Panc1 (cell line): ENCODE measurements at regions of chr3 and their contacts with region 1.

Region 1: GRCh38 chr3:30606301-30607031 is at the start of gene TGFBR2:
- DNase-seq: peak; percentile 86
- ATAC-seq: peak; percentile 96
- H3K4me3 ChIP-seq: peak within 1 kb of the TSS; percentile 78 to 96
- H3K27ac ChIP-seq: peak within 1 kb of the TSS; percentile 88
- H3K4me1 ChIP-seq: peaks cover 32% of the 10 kb centered on the region
- H3K27me3 ChIP-seq: no peaks in the 10 kb centered on the region
- CTCF ChIP-seq: peak; percentile 39; the same call in 1 of the 2 replicates
- total RNA-seq, gene TGFBR2: 45.9 TPM

Region 2: DNA sequence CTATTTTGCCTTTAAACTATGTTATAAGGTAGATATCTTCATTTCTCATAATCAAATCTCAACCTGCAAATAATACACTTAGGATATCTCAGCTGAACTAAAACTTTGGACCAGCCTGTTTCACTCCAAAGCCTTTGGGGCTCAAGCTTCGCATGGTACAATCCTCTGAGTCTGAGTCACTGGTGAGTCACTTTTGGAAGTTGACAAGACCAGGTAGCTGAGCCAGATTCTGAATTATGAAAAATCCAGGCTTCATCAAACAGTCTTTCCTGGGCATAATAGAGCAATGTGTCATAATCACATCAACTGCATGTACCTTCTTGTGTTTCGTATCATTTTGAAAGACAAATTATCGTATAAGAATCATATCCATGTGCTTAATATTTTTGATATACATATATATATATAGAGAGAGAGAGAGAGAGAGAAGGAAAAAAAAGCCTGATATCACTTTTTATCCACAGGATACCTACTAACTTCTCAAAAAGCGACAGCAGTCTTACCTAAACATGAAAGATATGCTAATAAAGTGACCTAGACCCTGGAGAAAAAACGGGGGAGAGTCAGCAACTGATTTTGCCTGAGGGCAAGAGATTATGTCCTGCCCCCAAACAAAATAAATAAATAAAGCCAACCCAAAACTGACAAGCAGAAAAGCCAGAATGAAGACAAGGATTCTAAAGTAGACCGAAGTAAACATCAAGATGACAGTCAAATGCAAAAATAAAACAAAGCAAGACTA is 264.0 kb before region 1 on chr3:
- CTCF ChIA-PET with region 1: no interaction called
- POLR2A ChIA-PET with region 1: no interaction called
- in situ Hi-C with region 1: no loop called
- intact Hi-C with region 1: loop called (anchors 5 kb)
- DNase-seq: peak; percentile 77
- ATAC-seq: peak; percentile 98
- H3K4me3 ChIP-seq: no peak overlapping the region
- H3K27ac ChIP-seq: peak overlapping the region; percentile 85
- H3K4me1 ChIP-seq: peaks cover 21% of the 10 kb centered on the region
- H3K27me3 ChIP-seq: no peaks in the 10 kb centered on the region
- CTCF ChIP-seq: no peak

Region 3: DNA sequence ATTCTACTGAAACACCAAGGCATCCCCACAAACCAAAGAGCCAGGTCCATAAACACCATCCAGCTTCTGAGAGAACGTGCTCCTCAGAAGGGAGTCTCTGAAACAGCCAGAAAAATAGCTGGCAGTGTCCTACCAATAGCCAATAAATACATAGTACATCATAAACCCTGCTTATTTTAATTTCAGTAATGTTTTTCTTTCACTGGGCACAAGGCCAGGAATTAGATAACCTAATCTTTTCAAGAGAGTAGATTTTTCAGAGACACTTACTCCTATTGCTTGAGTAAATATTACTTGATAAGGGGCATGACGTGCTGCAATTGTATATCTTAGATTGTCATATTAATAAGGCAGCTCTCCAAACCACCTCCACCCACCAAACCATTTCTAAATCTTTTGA is 265.3 kb after region 1 on chr3:
- CTCF ChIA-PET with region 1: no interaction called
- POLR2A ChIA-PET with region 1: no interaction called
- in situ Hi-C with region 1: no loop called
- intact Hi-C with region 1: no loop called
- DNase-seq: no peak
- ATAC-seq: no peak
- H3K4me3 ChIP-seq: no peak overlapping the region
- H3K27ac ChIP-seq: no peak overlapping the region
- H3K4me1 ChIP-seq: no peaks in the 10 kb centered on the region
- H3K27me3 ChIP-seq: 0 out of 2 replicates have a peak, but pooled peaks cover 2% of the 10 kb centered on the region
- CTCF ChIP-seq: no peak

Region 4: GRCh38 chr3:30945291-30945690 is 338.8 kb after region 1 on chr3:
- CTCF ChIA-PET with region 1: no interaction called
- POLR2A ChIA-PET with region 1: no interaction called
- in situ Hi-C with region 1: no loop called
- intact Hi-C with region 1: no loop called
- DNase-seq: no peak
- ATAC-seq: no peak
- H3K4me3 ChIP-seq: no peak overlapping the region
- H3K27ac ChIP-seq: no peak overlapping the region
- H3K4me1 ChIP-seq: no peaks in the 10 kb centered on the region
- H3K27me3 ChIP-seq: no peaks in the 10 kb centered on the region
- CTCF ChIP-seq: no peak